ENCODE measurements at regions of chr11 and their contacts with region 1.

Region 1: GRCh38 chr11:61967116-61967923 is at the start of gene FTH1:
- DNase-seq: peak; percentile 90 to 95
- ATAC-seq: peak; percentile 81 to 88 (median 86)
- H3K4me3 ChIP-seq: peak within 1 kb of the TSS; percentile 76
- H3K4me3 Mint-ChIP-seq: peak within 1 kb of the TSS; percentile 95
- H3K27ac ChIP-seq: peak within 1 kb of the TSS; percentile 91
- H3K27ac Mint-ChIP-seq: peak within 1 kb of the TSS; percentile 91 to 93
- H3K4me1 ChIP-seq: peaks cover 56% of the 10 kb centered on the region
- H3K4me1 Mint-ChIP-seq: peaks cover 50 to 63% of the 10 kb centered on the region in 2 donors
- H3K27me3 ChIP-seq: no peaks in the 10 kb centered on the region
- H3K27me3 Mint-ChIP-seq: no peaks in the 10 kb centered on the region
- CTCF ChIP-seq: no peak
- total RNA-seq, gene FTH1: 1,067 to 1,951 (median 1,796) TPM

Region 2: DNA sequence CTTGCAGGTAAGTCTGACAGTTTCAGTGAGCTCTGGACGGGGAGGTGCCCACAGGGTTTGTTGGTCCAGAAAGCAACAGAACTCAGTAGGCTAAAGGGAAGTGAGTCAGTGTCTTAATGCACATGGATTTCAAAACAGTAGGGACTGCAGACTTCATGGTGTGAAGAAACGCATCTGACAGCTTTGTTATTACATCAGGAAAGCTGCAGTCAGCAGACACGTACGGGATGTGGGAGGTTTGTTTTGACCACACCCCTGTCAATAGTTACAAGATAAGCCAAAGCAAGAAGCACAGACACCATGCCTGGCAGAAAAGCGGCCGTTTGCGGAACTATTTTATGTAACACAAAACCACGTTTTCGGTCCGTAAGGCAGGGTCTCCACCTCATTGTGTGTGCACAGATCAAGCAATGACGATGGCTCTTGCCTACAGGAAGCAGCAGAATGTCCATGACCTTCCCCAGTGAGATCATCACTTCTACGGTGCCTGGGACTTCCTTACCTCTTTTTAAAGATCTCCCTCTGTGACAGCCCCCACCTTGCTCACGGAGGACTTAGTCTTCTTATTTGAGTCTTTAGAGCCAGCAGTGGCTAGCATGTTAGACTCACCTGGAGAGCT is 58.3 kb after region 1 on chr11:
- intact Hi-C with region 1: loop called (anchors 1 kb)
- DNase-seq: peak; percentile 70 to 96
- ATAC-seq: peak; percentile 82 to 93 (median 84)
- H3K4me3 ChIP-seq: no peak overlapping the region
- H3K4me3 Mint-ChIP-seq: peak overlapping the region; percentile 75
- H3K27ac ChIP-seq: peak overlapping the region; percentile 91
- H3K27ac Mint-ChIP-seq: peak overlapping the region; percentile 87 to 93
- H3K4me1 ChIP-seq: peaks cover 16% of the 10 kb centered on the region
- H3K4me1 Mint-ChIP-seq: peaks cover 13 to 16% of the 10 kb centered on the region in 2 donors
- H3K27me3 ChIP-seq: no peaks in the 10 kb centered on the region
- H3K27me3 Mint-ChIP-seq: no peaks in the 10 kb centered on the region
- CTCF ChIP-seq: no peak